ENCODE measurements at regions of chr1 and their contacts with region 1.

Region 1: DNA sequence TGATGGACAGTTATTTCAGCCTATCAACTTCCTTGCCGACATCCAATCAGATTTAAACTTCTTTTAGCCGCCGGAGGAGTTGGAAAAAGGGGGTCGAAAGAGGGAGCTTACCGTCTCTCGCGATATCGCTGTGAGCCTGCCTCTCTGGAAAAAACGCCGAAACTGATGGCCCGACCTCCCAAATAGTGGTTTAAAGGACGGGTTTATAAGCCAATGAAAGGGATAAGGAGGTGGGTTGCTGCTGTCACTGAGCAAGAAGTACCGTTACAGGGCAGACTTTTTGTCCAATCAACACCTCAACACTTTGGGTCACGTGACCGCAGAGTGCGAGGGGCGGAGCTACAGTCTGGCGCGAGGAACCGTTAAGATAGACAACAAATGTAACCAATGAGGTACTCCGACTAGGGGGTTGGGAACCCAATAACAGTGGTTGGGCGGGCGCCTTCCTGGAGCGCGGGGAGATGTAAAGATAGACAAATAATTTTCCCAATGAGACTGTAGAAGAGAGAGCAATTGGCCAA is at the start of gene RBM15:
- DNase-seq: peak; percentile 92 to 100 (median 96)
- ATAC-seq: peak; percentile 74
- H3K4me3 ChIP-seq: peak within 1 kb of the TSS; percentile 91 to 97
- H3K4me3 Mint-ChIP-seq: no peak within 1 kb of the TSS
- H3K27ac ChIP-seq: peak within 1 kb of the TSS; percentile 87 to 98
- H3K27ac Mint-ChIP-seq: no peak within 1 kb of the TSS
- H3K4me1 ChIP-seq: peaks cover 49% of the 10 kb centered on the region
- H3K4me1 Mint-ChIP-seq: peaks cover 56% of the 10 kb centered on the region
- H3K27me3 ChIP-seq: no peaks in the 10 kb centered on the region
- H3K27me3 Mint-ChIP-seq: no peaks in the 10 kb centered on the region
- CTCF ChIP-seq: no peak
- total RNA-seq, gene RBM15: 57.1 to 59.3 TPM

Region 2: DNA sequence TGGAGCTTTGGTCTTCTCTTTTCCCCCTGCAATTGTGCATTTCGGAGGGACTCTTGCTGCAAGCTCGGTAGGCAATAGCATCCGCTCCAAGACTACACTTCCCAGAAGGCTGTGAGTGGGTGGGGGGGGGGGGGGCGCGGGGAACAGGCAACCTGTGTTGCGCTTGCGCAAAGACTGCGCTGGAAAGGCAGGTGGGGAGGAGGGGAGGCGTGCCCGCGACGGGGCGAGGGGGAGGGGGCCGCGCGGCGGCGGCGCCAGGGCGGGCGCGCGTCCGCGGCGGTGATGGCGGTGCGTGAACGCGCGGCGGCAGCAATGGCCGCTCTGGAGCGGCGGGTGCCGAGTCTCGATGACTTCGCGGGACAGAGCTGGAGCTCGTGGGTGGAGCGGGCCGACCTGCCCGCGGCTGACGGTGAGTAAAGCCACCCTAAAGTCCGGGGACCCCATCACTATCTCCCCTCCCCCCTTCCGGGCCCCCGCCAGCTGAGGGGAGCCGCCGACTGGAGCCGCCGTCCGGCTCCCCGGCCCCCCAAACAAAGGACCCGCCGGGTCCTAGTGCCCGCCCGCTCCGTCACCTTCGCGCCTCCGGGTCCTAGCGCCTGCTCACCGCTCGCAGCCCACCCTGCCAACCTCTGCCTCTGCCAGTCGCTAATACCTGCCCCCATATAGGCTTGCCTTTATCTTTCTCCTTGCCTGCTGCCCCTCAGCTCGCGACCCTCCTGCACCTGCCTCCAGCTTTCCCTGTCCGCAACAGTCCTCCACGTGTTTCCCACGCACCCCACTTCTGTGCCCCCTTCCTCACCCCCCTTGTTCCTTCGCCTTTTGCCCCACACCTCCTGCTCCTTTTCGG is 855.1 kb before region 1 on chr1 and contains the start of gene ATXN7L2:
- CTCF ChIA-PET with region 1: no interaction called
- POLR2A ChIA-PET with region 1: no interaction called
- intact Hi-C with region 1: loop called in 1 of 2 experiments (anchors 2 kb)
- DNase-seq: peak; percentile 87 to 97 (median 92)
- ATAC-seq: peak; percentile 81
- H3K4me3 ChIP-seq: peak within 1 kb of the TSS; percentile 78 to 90
- H3K4me3 Mint-ChIP-seq: peak within 1 kb of the TSS; percentile 94
- H3K27ac ChIP-seq: peak within 1 kb of the TSS; percentile 78 to 93
- H3K27ac Mint-ChIP-seq: peak within 1 kb of the TSS; percentile 91
- H3K4me1 ChIP-seq: peaks cover 22% of the 10 kb centered on the region
- H3K4me1 Mint-ChIP-seq: peaks cover 35% of the 10 kb centered on the region
- H3K27me3 ChIP-seq: no peaks in the 10 kb centered on the region
- H3K27me3 Mint-ChIP-seq: peaks cover 2% of the 10 kb centered on the region
- CTCF ChIP-seq: no peak
- total RNA-seq, gene ATXN7L2: 16.8 to 19.4 TPM

Region 3: GRCh38 chr1:110203021-110203661 is 135.8 kb before region 1 on chr1:
- CTCF ChIA-PET with region 1: interaction called, 135 read pairs
- POLR2A ChIA-PET with region 1: interaction called, 73 read pairs
- intact Hi-C with region 1: no loop called
- DNase-seq: peak; percentile 43 to 86 (median 68)
- ATAC-seq: peak; percentile 80
- H3K4me3 ChIP-seq: no peak overlapping the region
- H3K4me3 Mint-ChIP-seq: no peak overlapping the region
- H3K27ac ChIP-seq: peak overlapping the region in 1 of 2 experiments; percentile 64
- H3K27ac Mint-ChIP-seq: peak overlapping the region; percentile 90
- H3K4me1 ChIP-seq: peaks cover 22% of the 10 kb centered on the region
- H3K4me1 Mint-ChIP-seq: peaks cover 25% of the 10 kb centered on the region
- H3K27me3 ChIP-seq: no peaks in the 10 kb centered on the region
- H3K27me3 Mint-ChIP-seq: no peaks in the 10 kb centered on the region
- CTCF ChIP-seq: peak; percentile 82

Region 4: GRCh38 chr1:110412576-110412975 is 73.6 kb after region 1 on chr1:
- CTCF ChIA-PET with region 1: interaction called, 21 read pairs
- POLR2A ChIA-PET with region 1: interaction called, 20 read pairs
- intact Hi-C with region 1: loop called (anchors 1 to 2 kb)
- DNase-seq: peak; percentile 25 to 72 (median 60)
- ATAC-seq: peak; percentile 41
- H3K4me3 ChIP-seq: no peak overlapping the region
- H3K4me3 Mint-ChIP-seq: no peak overlapping the region
- H3K27ac ChIP-seq: no peak overlapping the region
- H3K27ac Mint-ChIP-seq: no peak overlapping the region
- H3K4me1 ChIP-seq: peaks cover 6% of the 10 kb centered on the region
- H3K4me1 Mint-ChIP-seq: peaks cover 18% of the 10 kb centered on the region
- H3K27me3 ChIP-seq: no peaks in the 10 kb centered on the region
- H3K27me3 Mint-ChIP-seq: no peaks in the 10 kb centered on the region
- CTCF ChIP-seq: peak; percentile 64

Region 5: DNA sequence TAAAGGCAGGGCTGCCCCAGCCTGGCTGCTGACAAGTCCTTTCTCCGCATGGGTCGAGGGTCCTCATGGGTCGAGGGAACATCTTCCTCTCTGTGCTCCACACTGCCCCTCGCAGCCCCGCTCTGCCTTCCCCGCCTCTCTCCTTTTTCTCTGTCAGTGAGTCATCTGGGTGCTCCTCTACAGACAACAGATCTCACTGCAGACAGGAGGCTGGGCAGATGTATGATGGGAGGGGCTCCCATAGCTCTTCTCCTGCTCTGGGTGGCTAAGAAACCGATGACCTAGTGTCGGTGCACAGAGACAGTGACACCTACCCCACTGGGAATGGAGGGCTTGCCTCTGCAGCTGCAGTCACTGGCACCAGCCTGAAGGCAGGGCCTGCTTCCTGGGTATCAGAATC is 174.6 kb after region 1 on chr1:
- CTCF ChIA-PET with region 1: no interaction called
- POLR2A ChIA-PET with region 1: no interaction called
- intact Hi-C with region 1: no loop called
- DNase-seq: no peak
- ATAC-seq: no peak
- H3K4me3 ChIP-seq: no peak overlapping the region
- H3K4me3 Mint-ChIP-seq: no peak overlapping the region
- H3K27ac ChIP-seq: no peak overlapping the region
- H3K27ac Mint-ChIP-seq: no peak overlapping the region
- H3K4me1 ChIP-seq: no peaks in the 10 kb centered on the region
- H3K4me1 Mint-ChIP-seq: no peaks in the 10 kb centered on the region
- H3K27me3 ChIP-seq: no peaks in the 10 kb centered on the region
- H3K27me3 Mint-ChIP-seq: peaks cover 8% of the 10 kb centered on the region
- CTCF ChIP-seq: no peak

Region 6: GRCh38 chr1:110872745-110873720 is 534.1 kb after region 1 on chr1 and contains the start of gene CD53:
- CTCF ChIA-PET with region 1: no interaction called
- POLR2A ChIA-PET with region 1: no interaction called
- intact Hi-C with region 1: loop called in 1 of 2 experiments (anchors 5 kb)
- DNase-seq: peak in 8 of 9 experiments; percentile 39 to 92 (median 66)
- ATAC-seq: peak; percentile 70
- H3K4me3 ChIP-seq: peak within 1 kb of the TSS; percentile 83 to 86
- H3K4me3 Mint-ChIP-seq: peak within 1 kb of the TSS; percentile 96
- H3K27ac ChIP-seq: peak within 1 kb of the TSS; percentile 95 to 96
- H3K27ac Mint-ChIP-seq: peak within 1 kb of the TSS; percentile 98
- H3K4me1 ChIP-seq: peaks cover 49% of the 10 kb centered on the region
- H3K4me1 Mint-ChIP-seq: peaks cover 63% of the 10 kb centered on the region
- H3K27me3 ChIP-seq: no peaks in the 10 kb centered on the region
- H3K27me3 Mint-ChIP-seq: no peaks in the 10 kb centered on the region
- CTCF ChIP-seq: no peak
- total RNA-seq, gene CD53: 205 to 213 TPM

Region 7: GRCh38 chr1:111197598-111198284 is 858.8 kb after region 1 on chr1:
- CTCF ChIA-PET with region 1: no interaction called
- POLR2A ChIA-PET with region 1: no interaction called
- intact Hi-C with region 1: no loop called
- DNase-seq: peak; percentile 54 to 90 (median 73)
- ATAC-seq: peak; percentile 47
- H3K4me3 ChIP-seq: peak overlapping the region; percentile 74 to 93
- H3K4me3 Mint-ChIP-seq: peak overlapping the region; percentile 94
- H3K27ac ChIP-seq: peak overlapping the region; percentile 55 to 84
- H3K27ac Mint-ChIP-seq: peak overlapping the region; percentile 97
- H3K4me1 ChIP-seq: peaks cover 62% of the 10 kb centered on the region
- H3K4me1 Mint-ChIP-seq: peaks cover 75% of the 10 kb centered on the region
- H3K27me3 ChIP-seq: no peaks in the 10 kb centered on the region
- H3K27me3 Mint-ChIP-seq: no peaks in the 10 kb centered on the region
- CTCF ChIP-seq: no peak

Region 8: DNA sequence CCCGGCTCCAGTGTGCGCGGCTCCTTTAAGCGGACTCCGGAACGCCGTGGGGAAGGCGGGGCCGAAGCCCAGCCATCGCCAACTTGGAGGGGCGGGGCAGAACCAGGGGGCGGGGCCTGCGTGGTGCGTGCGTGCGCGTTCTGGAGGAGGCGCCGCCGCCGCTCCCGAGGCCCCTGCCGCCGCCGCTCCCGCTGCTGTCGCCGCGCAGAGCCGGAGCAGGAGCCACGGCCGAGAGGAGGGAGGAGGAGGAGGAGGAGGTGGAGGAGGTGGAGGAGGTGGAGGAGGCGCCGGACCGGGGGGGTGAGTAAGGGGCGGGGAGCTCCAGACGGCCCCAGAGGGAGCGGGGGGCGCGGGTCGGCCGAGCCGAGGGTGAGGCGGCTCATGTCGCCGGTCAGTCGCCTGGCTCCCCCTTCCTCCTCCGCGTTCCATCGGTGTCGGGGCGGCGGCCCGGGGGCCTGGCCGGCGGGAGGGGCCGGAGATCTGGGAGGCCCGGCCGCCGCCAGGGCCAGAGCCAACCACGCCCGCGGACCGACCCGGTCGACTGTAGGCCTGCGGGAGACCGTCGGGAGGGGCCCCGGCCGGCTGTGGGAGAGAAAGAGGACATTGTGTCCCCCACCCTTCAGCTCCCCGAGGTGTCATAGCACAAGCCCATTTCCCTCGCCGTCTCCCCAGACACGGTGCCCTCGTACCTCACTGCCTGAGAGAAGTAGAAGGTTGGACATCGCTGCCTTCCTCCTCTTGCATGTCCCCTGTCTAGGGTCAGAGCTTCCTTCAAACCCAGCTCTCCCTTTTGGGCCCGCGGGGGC is 1280.9 kb after region 1 on chr1 and contains the start of gene RAP1A:
- CTCF ChIA-PET with region 1: no interaction called
- POLR2A ChIA-PET with region 1: no interaction called
- intact Hi-C with region 1: loop called in 1 of 2 experiments (anchors 10 kb)
- DNase-seq: peak; percentile 93 to 97 (median 94)
- ATAC-seq: peak; percentile 80
- H3K4me3 ChIP-seq: peak within 1 kb of the TSS; percentile 71 to 87
- H3K4me3 Mint-ChIP-seq: peak within 1 kb of the TSS; percentile 95
- H3K27ac ChIP-seq: peak within 1 kb of the TSS; percentile 66 to 86
- H3K27ac Mint-ChIP-seq: peak within 1 kb of the TSS; percentile 95
- H3K4me1 ChIP-seq: peaks cover 60% of the 10 kb centered on the region
- H3K4me1 Mint-ChIP-seq: peaks cover 70% of the 10 kb centered on the region
- H3K27me3 ChIP-seq: no peaks in the 10 kb centered on the region
- H3K27me3 Mint-ChIP-seq: no peaks in the 10 kb centered on the region
- CTCF ChIP-seq: no peak
- total RNA-seq, gene RAP1A: 63.4 to 68.5 TPM